ENCODE measurements at regions of chr16 and their contacts with region 1.

Region 1: GRCh38 chr16:79169239-79169638 is 431.3 kb downstream of the MAF start:
- DNase-seq: no peak

Region 2: DNA sequence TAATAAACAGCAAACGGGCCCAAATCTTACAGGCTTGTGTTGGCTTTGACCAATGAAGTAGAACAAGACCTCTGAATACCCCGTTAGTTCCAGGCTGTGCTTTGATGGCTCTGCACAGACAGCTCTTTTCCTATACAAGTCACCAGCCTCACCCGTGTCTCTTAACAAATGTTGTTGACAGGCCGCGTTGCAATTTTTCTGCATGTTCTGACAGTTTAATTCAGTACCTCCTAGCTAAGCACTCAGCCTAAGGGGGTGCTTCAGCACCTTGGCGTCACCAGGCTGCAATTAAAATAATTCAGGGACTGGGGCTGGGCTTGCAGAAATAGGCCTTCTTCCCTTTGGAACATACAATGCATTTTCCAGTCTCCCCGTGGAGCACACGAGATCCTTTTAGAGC is 68.8 kb before region 1 on chr16:
- intact Hi-C with region 1: loop called (anchors 10 kb)
- DNase-seq: no peak

Region 3: GRCh38 chr16:79124012-79124756 is 45.1 kb before region 1 on chr16:
- intact Hi-C with region 1: no loop called
- DNase-seq: no peak

Region 4: DNA sequence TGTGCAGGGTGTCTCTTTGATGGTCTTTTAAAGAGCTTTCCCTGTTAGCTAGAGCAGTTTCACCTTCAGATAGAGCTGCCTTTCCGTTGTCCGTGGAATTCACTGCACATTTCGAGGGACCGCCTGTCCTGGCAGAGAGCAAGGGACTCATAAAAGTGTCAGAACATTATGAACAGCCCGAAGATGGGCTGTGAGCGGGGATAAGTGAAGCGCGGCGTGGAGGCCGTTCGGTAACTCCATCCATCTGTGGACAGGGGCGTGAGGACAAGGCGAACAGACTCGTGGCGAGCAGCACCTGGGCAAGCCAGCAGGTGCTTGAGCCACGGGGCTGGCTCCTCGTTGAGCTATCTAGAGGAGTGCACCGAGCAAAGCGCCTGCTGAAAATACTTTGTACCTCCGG is 60.1 kb after region 1 on chr16:
- intact Hi-C with region 1: no loop called
- DNase-seq: no peak

Region 5: GRCh38 chr16:79372503-79373184 is 203.4 kb after region 1 on chr16:
- intact Hi-C with region 1: no loop called
- DNase-seq: no peak